K562 (cell line): ENCODE measurements at regions of chr13 and their contacts with region 1.

Region 1: GRCh38 chr13:91302111-91302510 is 45.4 kb upstream of the MIR17HG start:
- DNase-seq: no peak
- ATAC-seq: no peak
- H3K4me3 ChIP-seq: no peak overlapping the region
- H3K27ac ChIP-seq: no peak overlapping the region
- H3K4me1 ChIP-seq: no peaks in the 10 kb centered on the region
- H3K27me3 ChIP-seq: no peaks in the 10 kb centered on the region
- CTCF ChIP-seq: no peak
- EP300 ChIP-seq: no peak
- POLR2A ChIP-seq: no peak
- RAD21 ChIP-seq: no peak

Region 2: DNA sequence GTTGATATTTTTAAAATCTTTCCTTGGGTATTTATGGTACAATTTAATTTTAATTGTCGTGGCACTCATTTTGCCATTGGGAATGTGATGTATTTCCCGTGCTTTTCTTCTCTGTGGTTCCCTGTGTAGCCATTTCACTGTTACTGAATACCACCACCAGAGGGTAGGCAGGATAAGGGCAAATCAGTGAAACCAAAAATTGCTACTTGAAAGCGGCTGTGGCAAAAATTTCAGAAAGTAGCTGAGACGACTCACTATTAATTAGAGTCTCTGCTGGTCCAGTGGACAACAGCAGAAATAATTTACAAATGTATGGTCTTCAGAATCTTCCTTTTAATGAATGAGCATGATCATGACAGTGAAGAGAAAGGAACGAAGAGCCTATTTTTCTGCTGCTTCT is 11.0 kb after region 1 on chr13:
- CTCF ChIA-PET with region 1: interaction called, 3 read pairs
- POLR2A ChIA-PET with region 1: interaction called, 10 read pairs
- in situ Hi-C with region 1: no loop called
- intact Hi-C with region 1: no loop called
- DNase-seq: peak in 2 of 4 experiments; percentile 45 to 65
- ATAC-seq: peak; percentile 84
- H3K4me3 ChIP-seq: no peak overlapping the region
- H3K27ac ChIP-seq: no peak overlapping the region
- H3K4me1 ChIP-seq: no peaks in the 10 kb centered on the region
- H3K27me3 ChIP-seq: no peaks in the 10 kb centered on the region
- CTCF ChIP-seq: no peak
- EP300 ChIP-seq: no peak
- POLR2A ChIP-seq: no peak
- RAD21 ChIP-seq: peak in 1 of 2 experiments; percentile 88; a peak in 2 of 4 replicates

Region 3: DNA sequence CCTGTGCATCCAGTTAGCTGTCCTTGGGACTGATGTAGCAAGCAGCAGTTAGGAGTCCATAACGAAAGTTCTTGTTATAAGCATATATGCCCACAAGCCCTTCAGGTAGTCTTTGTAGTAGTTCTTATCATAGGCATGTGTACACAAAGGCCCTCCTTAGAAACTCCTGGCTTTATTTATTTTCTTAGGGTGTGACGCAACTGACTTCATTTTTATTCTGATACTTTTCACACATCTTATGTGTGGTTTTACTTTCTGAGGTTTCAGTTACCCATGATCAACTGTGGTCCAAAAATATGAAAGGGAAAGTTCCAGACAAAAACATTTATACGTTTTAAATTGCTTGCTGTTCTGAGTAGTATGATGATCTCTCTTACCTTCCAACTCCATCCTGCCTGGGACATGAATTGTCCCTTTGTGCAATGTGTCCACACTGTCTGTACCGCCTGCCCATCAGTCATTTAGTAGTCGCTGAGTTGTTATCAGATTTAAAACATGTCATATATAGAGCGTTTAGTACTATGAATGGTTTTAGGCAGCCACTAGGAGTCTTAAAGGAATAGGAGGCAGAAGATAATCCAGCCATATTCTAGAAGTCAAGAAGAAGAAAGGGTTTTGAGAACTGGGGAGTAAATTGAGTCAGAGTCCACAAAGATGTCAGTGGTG is 115.7 kb after region 1 on chr13:
- CTCF ChIA-PET with region 1: no interaction called
- POLR2A ChIA-PET with region 1: no interaction called
- in situ Hi-C with region 1: no loop called
- intact Hi-C with region 1: no loop called
- DNase-seq: no peak
- ATAC-seq: peak; percentile 34; the same call in 2 of the 3 replicates
- H3K4me3 ChIP-seq: no peak overlapping the region
- H3K27ac ChIP-seq: no peak overlapping the region
- H3K4me1 ChIP-seq: no peaks in the 10 kb centered on the region
- H3K27me3 ChIP-seq: no peaks in the 10 kb centered on the region
- CTCF ChIP-seq: no peak
- EP300 ChIP-seq: no peak
- POLR2A ChIP-seq: no peak
- RAD21 ChIP-seq: no peak

Region 4: DNA sequence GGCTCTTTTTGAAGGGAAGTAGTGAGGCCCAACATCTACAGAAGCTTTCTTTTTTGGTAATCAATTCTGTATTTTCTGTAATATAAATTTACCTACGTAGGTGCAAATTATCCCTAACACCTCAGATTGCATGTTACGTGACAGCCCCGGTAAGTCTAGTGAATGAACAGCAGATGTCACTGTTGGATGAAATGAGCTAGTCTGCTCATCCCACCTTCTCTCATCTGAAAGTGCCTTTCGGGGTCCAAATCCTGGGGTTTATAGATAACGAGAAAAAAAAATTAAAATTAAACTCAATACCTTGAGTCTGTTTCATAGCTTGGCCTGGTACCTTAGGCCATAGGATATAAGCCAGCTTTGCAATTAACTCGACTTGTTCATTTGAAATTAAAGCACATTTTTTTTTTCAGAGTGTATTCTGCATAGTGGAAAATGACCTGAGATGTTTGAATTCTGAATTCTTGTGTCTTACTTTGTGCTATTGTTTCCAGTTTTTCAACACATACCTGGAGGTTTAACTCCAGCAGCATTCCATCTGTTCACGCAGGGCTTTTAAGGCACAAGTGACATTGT is 644.5 kb after region 1 on chr13:
- CTCF ChIA-PET with region 1: no interaction called
- POLR2A ChIA-PET with region 1: no interaction called
- in situ Hi-C with region 1: no loop called
- intact Hi-C with region 1: no loop called
- DNase-seq: peak in 2 of 4 experiments; percentile 1
- ATAC-seq: no peak
- H3K4me3 ChIP-seq: no peak overlapping the region
- H3K27ac ChIP-seq: no peak overlapping the region
- H3K4me1 ChIP-seq: no peaks in the 10 kb centered on the region
- H3K27me3 ChIP-seq: no peaks in the 10 kb centered on the region
- CTCF ChIP-seq: no peak
- EP300 ChIP-seq: no peak
- POLR2A ChIP-seq: no peak
- RAD21 ChIP-seq: peak in 1 of 2 experiments; percentile 30; a peak in 2 of 4 replicates